ENCODE measurements at regions of chr19 and their contacts with region 1.

Region 1: GRCh38 chr19:1672038-1672768 is 19.8 kb upstream of the TCF3 start:
- DNase-seq: no peak
- H3K4me3 ChIP-seq: peak overlapping the region; percentile 42
- CTCF ChIP-seq: peak; percentile 88

Region 2: GRCh38 chr19:1540365-1540925 is 131.8 kb before region 1 on chr19:
- CTCF ChIA-PET with region 1: interaction called, 59 read pairs
- POLR2A ChIA-PET with region 1: no interaction called
- DNase-seq: no peak
- H3K4me3 ChIP-seq: no peak overlapping the region
- CTCF ChIP-seq: no peak

Region 3: DNA sequence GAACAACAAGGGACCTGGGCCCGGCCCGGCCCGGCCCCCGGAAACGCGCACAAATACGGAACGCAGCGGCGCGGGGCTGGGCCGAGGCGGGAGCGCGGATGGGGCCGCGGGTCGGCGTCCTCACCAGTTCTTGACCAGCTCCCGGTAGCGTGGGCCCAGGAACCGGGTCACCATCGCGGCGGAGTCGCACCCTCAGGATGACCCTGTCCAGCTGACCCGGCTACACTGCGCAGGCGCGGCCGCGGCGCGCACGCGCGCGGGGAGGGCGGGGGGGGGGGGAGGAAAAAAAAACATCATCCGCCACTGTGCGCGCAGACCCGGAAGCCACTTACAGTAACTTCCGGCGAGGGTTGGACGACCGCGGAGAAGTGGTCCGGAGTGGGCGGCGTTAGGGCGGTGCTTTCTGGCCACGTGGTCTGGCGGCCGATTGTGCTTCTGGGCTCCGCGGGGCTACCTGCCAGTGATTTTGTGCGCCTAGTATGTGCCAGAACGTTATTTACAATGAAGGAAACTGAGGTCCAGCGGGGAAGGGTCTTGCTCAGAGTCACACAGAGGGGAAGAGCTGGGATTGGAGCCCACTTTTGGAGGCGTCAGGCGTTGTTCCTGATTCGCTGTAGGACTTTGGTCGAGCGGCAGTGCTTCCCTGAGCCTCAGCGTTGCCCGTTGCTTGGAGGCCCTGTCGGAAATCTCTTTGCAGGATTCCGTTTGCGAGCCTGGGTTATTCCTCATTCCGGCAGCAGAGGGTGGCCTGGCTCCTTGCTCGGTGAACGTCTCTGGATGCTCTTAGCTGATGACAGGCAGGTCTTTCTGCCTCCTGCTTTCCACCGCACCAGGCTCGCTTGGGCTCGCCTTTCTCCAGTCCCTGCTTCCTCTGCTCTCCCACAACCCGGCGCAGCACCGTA is 66.7 kb before region 1 on chr19 and contains the start of gene UQCR11:
- CTCF ChIA-PET with region 1: interaction called, 20 read pairs
- POLR2A ChIA-PET with region 1: interaction called, 3 read pairs
- DNase-seq: peak; percentile 85
- H3K4me3 ChIP-seq: peak within 1 kb of the TSS; percentile 94
- CTCF ChIP-seq: peak; percentile 69

Region 4: GRCh38 chr19:1736927-1737326 is 64.7 kb after region 1 on chr19:
- CTCF ChIA-PET with region 1: interaction called, 10 read pairs
- POLR2A ChIA-PET with region 1: no interaction called
- DNase-seq: no peak
- H3K4me3 ChIP-seq: no peak overlapping the region
- CTCF ChIP-seq: no peak

Region 5: DNA sequence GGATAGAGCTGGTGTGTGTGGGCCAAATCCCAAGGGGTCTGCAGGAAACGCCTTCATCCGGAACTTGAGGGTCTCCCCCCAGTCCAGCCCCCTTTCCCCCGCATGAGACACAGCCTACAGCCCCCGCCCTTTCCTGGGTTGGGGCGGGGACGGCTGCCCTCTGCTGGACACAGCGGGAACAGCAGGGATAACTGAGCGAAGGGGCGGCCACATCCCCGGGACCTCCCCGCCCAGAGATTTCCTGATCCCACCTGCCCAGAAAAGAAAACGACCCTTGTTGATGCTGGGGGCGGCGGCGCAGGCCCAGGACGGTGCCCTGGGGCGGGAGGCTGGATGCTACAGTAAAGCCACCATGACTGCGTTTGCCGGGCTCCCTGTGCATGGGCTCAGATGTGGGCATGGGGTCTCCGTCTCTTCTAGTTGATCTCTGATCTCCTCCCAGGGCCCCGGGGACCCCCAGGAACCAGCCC is 95.3 kb after region 1 on chr19:
- CTCF ChIA-PET with region 1: interaction called, 105 read pairs
- POLR2A ChIA-PET with region 1: no interaction called
- DNase-seq: no peak
- H3K4me3 ChIP-seq: no peak overlapping the region
- CTCF ChIP-seq: peak; percentile 93

Region 6: GRCh38 chr19:1789261-1790041 is 117.2 kb after region 1 on chr19:
- CTCF ChIA-PET with region 1: interaction called, 143 read pairs
- POLR2A ChIA-PET with region 1: no interaction called
- DNase-seq: no peak
- H3K4me3 ChIP-seq: no peak overlapping the region; the same call in 1 of the 2 replicates
- CTCF ChIP-seq: no peak

Region 7: GRCh38 chr19:1812469-1813196 is 140.4 kb after region 1 on chr19:
- CTCF ChIA-PET with region 1: interaction called, 10 read pairs
- POLR2A ChIA-PET with region 1: no interaction called
- DNase-seq: peak; percentile 36
- H3K4me3 ChIP-seq: peak overlapping the region; percentile 68
- CTCF ChIP-seq: peak; percentile 69

Measured in AG04449 (cell line).